ENCODE measurements at regions of chr14 and their contacts with region 1.

Region 1: GRCh38 chr14:78448164-78449094 is 278.3 kb downstream of the NRXN3 start:
- DNase-seq: peak; percentile 49 to 60
- H3K4me3 ChIP-seq: no peak overlapping the region
- H3K4me3 Mint-ChIP-seq: no peak overlapping the region
- H3K27ac Mint-ChIP-seq: no peak overlapping the region
- H3K4me1 ChIP-seq: no peaks in the 10 kb centered on the region
- H3K4me1 Mint-ChIP-seq: no peaks in the 10 kb centered on the region
- H3K27me3 ChIP-seq: no peaks in the 10 kb centered on the region; the same call in 1 of the 2 replicates
- H3K27me3 Mint-ChIP-seq: no peaks in the 10 kb centered on the region
- CTCF ChIP-seq: peak; percentile 67 to 75

Region 2: GRCh38 chr14:78469746-78470346 is 21.4 kb after region 1 on chr14:
- CTCF ChIA-PET with region 1: no interaction called
- POLR2A ChIA-PET with region 1: no interaction called
- intact Hi-C with region 1: no loop called
- DNase-seq: no peak
- H3K4me3 ChIP-seq: no peak overlapping the region
- H3K4me3 Mint-ChIP-seq: no peak overlapping the region
- H3K27ac Mint-ChIP-seq: no peak overlapping the region
- H3K4me1 ChIP-seq: no peaks in the 10 kb centered on the region
- H3K4me1 Mint-ChIP-seq: no peaks in the 10 kb centered on the region
- H3K27me3 ChIP-seq: no peaks in the 10 kb centered on the region
- H3K27me3 Mint-ChIP-seq: peaks cover 11% of the 10 kb centered on the region
- CTCF ChIP-seq: no peak

Region 3: GRCh38 chr14:78509516-78509915 is 61.1 kb after region 1 on chr14:
- CTCF ChIA-PET with region 1: no interaction called
- POLR2A ChIA-PET with region 1: no interaction called
- intact Hi-C with region 1: no loop called
- DNase-seq: no peak
- H3K4me3 ChIP-seq: no peak overlapping the region
- H3K4me3 Mint-ChIP-seq: no peak overlapping the region
- H3K27ac Mint-ChIP-seq: no peak overlapping the region
- H3K4me1 ChIP-seq: no peaks in the 10 kb centered on the region
- H3K4me1 Mint-ChIP-seq: no peaks in the 10 kb centered on the region
- H3K27me3 ChIP-seq: no peaks in the 10 kb centered on the region
- H3K27me3 Mint-ChIP-seq: peaks cover 3% of the 10 kb centered on the region
- CTCF ChIP-seq: no peak

Region 4: GRCh38 chr14:78566026-78566858 is 117.8 kb after region 1 on chr14:
- CTCF ChIA-PET with region 1: interaction called, 9 read pairs
- POLR2A ChIA-PET with region 1: no interaction called
- intact Hi-C with region 1: loop called (anchors 1 kb)
- DNase-seq: peak; percentile 68 to 75
- H3K4me3 ChIP-seq: no peak overlapping the region
- H3K4me3 Mint-ChIP-seq: no peak overlapping the region
- H3K27ac Mint-ChIP-seq: no peak overlapping the region
- H3K4me1 ChIP-seq: no peaks in the 10 kb centered on the region
- H3K4me1 Mint-ChIP-seq: no peaks in the 10 kb centered on the region
- H3K27me3 ChIP-seq: no peaks in the 10 kb centered on the region
- H3K27me3 Mint-ChIP-seq: peaks cover 9% of the 10 kb centered on the region
- CTCF ChIP-seq: peak; percentile 61 to 78

Region 5: GRCh38 chr14:78598041-78598920 is 149.9 kb after region 1 on chr14:
- CTCF ChIA-PET with region 1: no interaction called
- POLR2A ChIA-PET with region 1: no interaction called
- intact Hi-C with region 1: loop called (anchors 1 kb)
- DNase-seq: peak; percentile 51 to 63
- H3K4me3 ChIP-seq: no peak overlapping the region
- H3K4me3 Mint-ChIP-seq: no peak overlapping the region
- H3K27ac Mint-ChIP-seq: no peak overlapping the region
- H3K4me1 ChIP-seq: no peaks in the 10 kb centered on the region
- H3K4me1 Mint-ChIP-seq: no peaks in the 10 kb centered on the region
- H3K27me3 ChIP-seq: no peaks in the 10 kb centered on the region
- H3K27me3 Mint-ChIP-seq: peaks cover 13% of the 10 kb centered on the region
- CTCF ChIP-seq: peak; percentile 78 to 93

Region 6: DNA sequence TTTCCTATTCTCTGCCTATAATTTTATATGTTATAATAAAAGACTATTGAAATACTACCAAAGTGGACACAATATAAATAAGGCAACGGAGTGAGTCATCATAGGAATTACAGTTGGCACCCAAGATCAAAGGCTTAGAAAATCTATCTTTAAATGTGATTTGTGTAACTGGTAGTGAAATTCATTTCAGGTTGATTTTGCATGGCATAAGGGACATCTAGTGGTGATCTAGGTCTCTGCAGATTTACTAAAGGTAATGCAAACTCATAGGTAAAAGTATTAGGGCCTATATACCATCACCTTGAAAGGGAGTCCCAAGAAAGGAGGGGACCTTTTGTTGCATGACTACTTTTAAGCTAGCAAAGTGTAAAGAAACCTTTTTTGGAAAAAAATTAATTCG is 248.9 kb after region 1 on chr14:
- CTCF ChIA-PET with region 1: no interaction called
- POLR2A ChIA-PET with region 1: no interaction called
- intact Hi-C with region 1: loop called (anchors 2 kb)
- DNase-seq: peak in 1 of 2 experiments; percentile 14
- H3K4me3 ChIP-seq: no peak overlapping the region
- H3K4me3 Mint-ChIP-seq: no peak overlapping the region
- H3K27ac Mint-ChIP-seq: no peak overlapping the region
- H3K4me1 ChIP-seq: no peaks in the 10 kb centered on the region
- H3K4me1 Mint-ChIP-seq: no peaks in the 10 kb centered on the region
- H3K27me3 ChIP-seq: no peaks in the 10 kb centered on the region
- H3K27me3 Mint-ChIP-seq: peaks cover 7% of the 10 kb centered on the region
- CTCF ChIP-seq: peak; percentile 38 to 60

Region 7: DNA sequence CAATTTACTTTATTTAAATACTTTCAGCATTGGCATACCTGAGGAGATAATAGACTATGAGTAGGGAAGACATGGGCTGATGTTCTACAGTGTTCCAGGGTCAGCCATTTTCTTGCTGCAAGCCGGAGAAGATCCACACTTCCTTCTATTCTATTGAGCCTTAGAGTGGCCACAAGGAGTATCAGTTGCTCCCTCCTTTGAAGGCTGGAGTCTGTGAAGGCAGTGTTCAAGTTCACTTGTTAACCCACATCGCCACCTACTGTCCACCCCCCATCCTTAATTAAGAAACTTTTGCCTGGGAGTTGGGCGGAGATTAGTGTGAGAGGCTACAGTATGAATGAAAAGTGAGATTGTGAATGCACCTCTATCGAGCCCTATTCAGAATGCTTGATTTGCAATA is 388.3 kb after region 1 on chr14:
- CTCF ChIA-PET with region 1: no interaction called
- POLR2A ChIA-PET with region 1: no interaction called
- intact Hi-C with region 1: loop called (anchors 10 kb)
- DNase-seq: peak; percentile 69
- H3K4me3 ChIP-seq: no peak overlapping the region
- H3K4me3 Mint-ChIP-seq: no peak overlapping the region
- H3K27ac Mint-ChIP-seq: no peak overlapping the region
- H3K4me1 ChIP-seq: no peaks in the 10 kb centered on the region
- H3K4me1 Mint-ChIP-seq: no peaks in the 10 kb centered on the region
- H3K27me3 ChIP-seq: no peaks in the 10 kb centered on the region
- H3K27me3 Mint-ChIP-seq: peaks cover 17% of the 10 kb centered on the region
- CTCF ChIP-seq: peak; percentile 57

Region 8: GRCh38 chr14:78946949-78947348 is 498.5 kb after region 1 on chr14:
- CTCF ChIA-PET with region 1: no interaction called
- POLR2A ChIA-PET with region 1: no interaction called
- intact Hi-C with region 1: no loop called
- DNase-seq: no peak
- H3K4me3 ChIP-seq: no peak overlapping the region
- H3K4me3 Mint-ChIP-seq: no peak overlapping the region
- H3K27ac Mint-ChIP-seq: no peak overlapping the region
- H3K4me1 ChIP-seq: 0 out of 2 replicates have a peak, but pooled peaks cover 3% of the 10 kb centered on the region
- H3K4me1 Mint-ChIP-seq: peaks cover 11% of the 10 kb centered on the region
- H3K27me3 ChIP-seq: no peaks in the 10 kb centered on the region; the same call in 1 of the 2 replicates
- H3K27me3 Mint-ChIP-seq: peaks cover 27% of the 10 kb centered on the region
- CTCF ChIP-seq: no peak